ENCODE measurements at regions of chr12 and their contacts with region 1.

Region 1: GRCh38 chr12:93894391-93895088 is 217.4 kb downstream of the CRADD start:
- DNase-seq: peak; percentile 94
- H3K4me3 ChIP-seq: peak overlapping the region; percentile 31 to 39 (median 36)
- H3K27ac ChIP-seq: peak overlapping the region; percentile 68 to 86 (median 77)
- H3K4me1 ChIP-seq: peaks cover 29 to 37% (median 35%) of the 10 kb centered on the region in 4 donors
- H3K27me3 ChIP-seq: no peaks in the 10 kb centered on the region
- CTCF ChIP-seq: no peak
- EP300 ChIP-seq: no peak
- POLR2A ChIP-seq: no peak

Region 2: DNA sequence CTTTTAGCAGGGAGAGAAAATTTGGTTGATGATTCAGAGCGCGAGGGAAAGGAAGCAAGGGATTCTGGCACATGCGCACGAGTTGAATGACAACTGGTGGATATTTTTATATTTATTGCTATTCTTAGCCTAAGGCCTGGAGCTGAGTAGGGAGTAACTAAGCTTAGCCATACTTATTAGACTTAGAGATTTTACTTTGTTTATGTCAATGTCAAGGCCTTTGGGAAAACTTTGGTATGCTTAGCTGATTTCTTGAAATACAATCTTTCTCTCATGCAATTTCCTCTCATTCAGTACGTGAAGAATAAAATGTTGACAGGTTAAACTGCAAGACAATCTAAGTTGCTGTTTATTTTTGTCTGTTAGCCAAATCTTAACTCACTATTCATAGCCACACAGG is 116.2 kb before region 1 on chr12:
- intact Hi-C with region 1: loop called (anchors 10 kb)
- DNase-seq: no peak
- H3K4me3 ChIP-seq: no peak overlapping the region
- H3K27ac ChIP-seq: peak overlapping the region; percentile 68 to 80 (median 78)
- H3K4me1 ChIP-seq: peaks cover 45 to 55% (median 51%) of the 10 kb centered on the region in 4 donors
- H3K27me3 ChIP-seq: no peaks in the 10 kb centered on the region
- CTCF ChIP-seq: no peak
- EP300 ChIP-seq: no peak
- POLR2A ChIP-seq: no peak

Region 3: DNA sequence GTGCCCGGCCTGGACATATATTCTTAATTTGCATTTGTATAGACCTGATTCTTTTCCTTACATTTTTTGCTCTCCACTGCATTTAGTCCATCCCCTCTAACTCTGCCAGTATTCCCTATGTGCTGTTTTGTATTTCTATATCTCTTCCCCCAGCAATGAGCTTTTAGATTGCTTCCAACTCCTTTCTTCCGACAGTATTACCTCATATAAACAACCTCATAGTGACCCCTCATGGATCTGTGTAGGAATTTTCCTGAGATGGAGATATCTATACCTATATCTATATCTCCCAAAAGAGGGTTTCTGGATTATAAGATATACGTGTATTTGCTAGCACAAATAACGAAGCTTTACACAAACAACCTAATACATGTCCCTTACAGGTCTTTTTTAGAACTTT is 55.5 kb before region 1 on chr12:
- intact Hi-C with region 1: loop called (anchors 5 kb)
- DNase-seq: no peak
- H3K4me3 ChIP-seq: no peak overlapping the region
- H3K27ac ChIP-seq: no peak overlapping the region
- H3K4me1 ChIP-seq: peaks cover 0 to 5% (median 0%) of the 10 kb centered on the region in 4 donors
- H3K27me3 ChIP-seq: no peaks in the 10 kb centered on the region
- CTCF ChIP-seq: peak in 1 of 3 experiments; percentile 15
- EP300 ChIP-seq: no peak
- POLR2A ChIP-seq: no peak

Region 4: DNA sequence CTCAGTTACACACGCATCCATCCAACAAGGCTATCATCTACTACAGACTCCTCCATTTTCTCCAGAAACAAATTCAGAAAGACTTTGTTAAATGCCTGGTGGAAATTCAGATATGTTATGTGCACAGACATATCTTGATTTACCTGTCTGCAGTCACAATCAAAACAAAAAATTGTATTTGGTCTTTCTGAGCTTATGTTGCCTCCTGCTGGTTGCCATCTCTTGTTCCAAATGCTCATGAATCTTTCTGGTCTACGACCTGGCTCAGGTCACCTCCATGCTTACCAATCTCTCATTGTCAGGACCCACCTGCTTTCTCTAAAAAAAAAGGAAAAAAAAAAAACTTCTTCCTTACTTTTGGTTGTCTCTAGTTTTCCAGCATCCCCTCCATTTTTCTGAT is 84.6 kb after region 1 on chr12:
- intact Hi-C with region 1: no loop called
- DNase-seq: no peak
- H3K4me3 ChIP-seq: no peak overlapping the region
- H3K27ac ChIP-seq: no peak overlapping the region
- H3K4me1 ChIP-seq: peaks cover 0 to 11% (median 7%) of the 10 kb centered on the region in 4 donors
- H3K27me3 ChIP-seq: no peaks in the 10 kb centered on the region
- CTCF ChIP-seq: peak; percentile 48 to 56 (median 56)
- EP300 ChIP-seq: no peak
- POLR2A ChIP-seq: no peak

Region 5: GRCh38 chr12:94074980-94075928 is 180.7 kb after region 1 on chr12:
- intact Hi-C with region 1: loop called (anchors 10 kb)
- DNase-seq: no peak
- H3K4me3 ChIP-seq: peak overlapping the region in 1 of 4 donors; percentile 6
- H3K27ac ChIP-seq: peak overlapping the region; percentile 74 to 77 (median 76)
- H3K4me1 ChIP-seq: peaks cover 15 to 28% (median 27%) of the 10 kb centered on the region in 4 donors
- H3K27me3 ChIP-seq: no peaks in the 10 kb centered on the region
- CTCF ChIP-seq: peak; percentile 63 to 71 (median 66)
- EP300 ChIP-seq: no peak
- POLR2A ChIP-seq: no peak

Measured in esophagus muscularis mucosa (tissue), 4 donors.